ENCODE measurements at regions of chr1 and their contacts with region 1.

Region 1: DNA sequence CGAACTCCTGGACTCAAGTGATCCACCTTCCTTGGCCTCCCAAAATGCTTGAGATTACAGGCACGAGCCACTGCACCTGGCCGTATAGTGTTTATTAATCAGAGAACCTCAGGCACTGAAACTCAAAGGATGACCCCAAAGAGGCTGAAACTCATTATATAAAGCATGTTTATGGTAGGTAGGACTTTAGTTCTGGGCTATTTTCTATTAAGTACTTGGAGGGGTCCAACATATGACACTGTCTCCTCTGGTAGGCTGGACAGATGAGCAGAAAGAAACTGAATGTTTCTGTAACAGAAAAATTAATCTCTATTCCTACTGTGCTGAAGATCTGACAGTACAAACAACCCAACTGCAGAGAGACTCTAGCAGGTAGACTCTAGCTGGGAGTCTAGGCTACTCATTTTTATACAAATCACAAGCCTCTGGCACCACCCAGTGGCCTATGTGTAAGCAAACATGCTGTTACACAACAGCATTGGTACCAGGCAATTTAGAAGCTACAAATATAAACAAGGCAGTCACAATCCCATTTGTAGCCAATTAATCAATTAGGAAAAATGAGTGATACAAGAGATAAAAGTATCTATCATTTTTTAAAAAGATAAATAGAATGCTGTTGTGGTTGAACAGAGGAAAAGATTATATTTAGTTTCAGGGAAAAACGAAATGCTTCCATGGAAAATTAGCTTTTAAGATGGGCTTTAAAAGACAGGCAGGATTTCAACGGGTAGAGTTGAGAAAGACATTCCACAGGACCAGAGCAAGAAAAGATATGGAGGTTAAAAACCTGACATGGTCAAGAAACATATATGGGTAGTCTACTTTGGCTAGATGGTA is 10.4 kb downstream of the DCAF8 start:
- DNase-seq: peak; percentile 52 to 72 (median 56)
- H3K4me3 ChIP-seq: no peak overlapping the region
- H3K4me3 Mint-ChIP-seq: no peak overlapping the region
- H3K27ac ChIP-seq: no peak overlapping the region
- H3K27ac Mint-ChIP-seq: peak overlapping the region; percentile 2 to 90 (median 79)
- H3K4me1 ChIP-seq: peaks cover 12% of the 10 kb centered on the region
- H3K4me1 Mint-ChIP-seq: peaks cover 15 to 20% (median 18%) of the 10 kb centered on the region in 4 donors
- H3K27me3 ChIP-seq: no peaks in the 10 kb centered on the region
- H3K27me3 Mint-ChIP-seq: no peaks in the 10 kb centered on the region

Region 2: DNA sequence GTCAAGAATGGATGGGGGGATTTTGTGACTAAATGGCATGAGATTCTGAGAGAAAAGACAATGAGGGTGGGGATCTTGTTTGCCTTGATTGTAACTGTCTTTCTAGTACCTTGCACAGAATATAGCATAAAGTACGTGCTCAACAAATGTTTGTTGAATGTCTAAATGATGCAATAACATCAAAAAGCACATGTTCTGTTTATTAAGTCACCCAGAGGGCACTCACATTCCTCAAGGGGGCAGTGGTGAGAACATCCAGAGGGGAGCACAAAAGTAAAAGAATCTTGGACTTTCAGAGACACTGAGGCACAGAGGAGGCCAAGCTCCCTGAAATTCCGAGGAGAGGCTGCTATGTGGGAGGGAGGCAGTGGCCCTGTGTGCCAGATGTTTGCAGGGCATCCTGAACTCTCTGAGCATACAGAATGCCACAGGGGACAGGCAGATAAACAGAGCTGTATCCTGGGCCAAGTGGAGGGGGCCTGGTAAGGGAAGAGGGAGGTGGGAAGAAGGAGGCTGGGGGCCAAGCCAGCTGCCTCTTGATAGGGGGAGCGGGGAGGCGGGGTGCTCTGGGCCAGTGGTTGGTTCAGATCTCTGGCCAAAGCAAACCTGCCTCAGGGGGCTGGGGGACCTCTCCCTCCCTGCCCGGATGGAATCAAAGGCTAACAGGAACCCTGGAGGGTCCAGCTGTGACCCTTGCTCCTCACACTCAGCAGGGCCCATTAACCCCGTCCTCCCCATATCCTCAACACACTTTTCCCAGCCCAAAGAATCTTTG is 142.8 kb before region 1 on chr1:
- CTCF ChIA-PET with region 1: interaction called, 45 read pairs
- POLR2A ChIA-PET with region 1: no interaction called
- intact Hi-C with region 1: loop called (anchors 2 kb)
- DNase-seq: peak in 2 of 5 donors; percentile 21 to 35
- H3K4me3 ChIP-seq: no peak overlapping the region
- H3K4me3 Mint-ChIP-seq: peak overlapping the region in 1 of 8 donors; percentile 62
- H3K27ac ChIP-seq: no peak overlapping the region
- H3K27ac Mint-ChIP-seq: peak overlapping the region in 2 of 7 donors; percentile 5 to 37
- H3K4me1 ChIP-seq: no peaks in the 10 kb centered on the region
- H3K4me1 Mint-ChIP-seq: no peaks in the 10 kb centered on the region
- H3K27me3 ChIP-seq: no peaks in the 10 kb centered on the region
- H3K27me3 Mint-ChIP-seq: peaks cover 1 to 12% of the 10 kb centered on the region in 2 donors

Region 3: DNA sequence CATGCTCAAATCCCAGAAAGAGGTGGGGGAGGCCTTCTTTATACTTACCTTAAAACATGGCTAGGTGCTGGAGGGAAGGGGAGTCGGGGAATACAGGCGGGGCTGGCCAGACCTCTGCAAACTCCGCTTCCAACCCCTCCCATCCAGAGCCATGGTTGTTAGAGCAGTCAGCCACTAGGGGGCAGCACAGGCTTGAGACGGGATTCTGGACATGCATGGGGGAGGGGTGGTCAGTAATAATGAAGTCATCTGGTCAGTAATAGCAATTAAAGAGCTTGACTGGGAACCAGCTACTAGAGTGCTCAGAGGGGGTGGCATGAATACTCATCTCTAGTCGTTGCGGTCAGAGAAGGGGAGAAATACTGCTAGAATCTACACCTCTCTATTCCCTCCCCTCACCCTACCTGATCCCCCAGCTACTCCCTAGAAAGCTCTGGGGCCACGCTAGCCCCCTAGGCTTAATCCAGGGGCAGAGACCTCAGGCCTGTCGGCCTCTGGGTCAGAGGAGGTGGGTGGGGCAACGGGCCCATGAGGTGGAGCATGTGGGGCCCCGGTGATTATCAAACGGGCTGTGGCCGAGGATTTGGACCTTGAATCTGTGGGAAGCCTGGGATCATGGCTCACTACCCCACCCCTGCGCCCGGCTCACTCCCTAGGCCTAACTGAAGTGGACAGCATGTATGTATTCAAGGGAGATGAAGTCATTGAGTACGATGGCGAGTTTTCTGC is 58.7 kb before region 1 on chr1:
- CTCF ChIA-PET with region 1: interaction called, 54 read pairs
- POLR2A ChIA-PET with region 1: no interaction called
- intact Hi-C with region 1: loop called (anchors 1 kb)
- DNase-seq: peak; percentile 67 to 75 (median 68)
- H3K4me3 ChIP-seq: no peak overlapping the region
- H3K4me3 Mint-ChIP-seq: no peak overlapping the region
- H3K27ac ChIP-seq: no peak overlapping the region
- H3K27ac Mint-ChIP-seq: no peak overlapping the region
- H3K4me1 ChIP-seq: peaks cover 9% of the 10 kb centered on the region
- H3K4me1 Mint-ChIP-seq: no peaks in the 10 kb centered on the region
- H3K27me3 ChIP-seq: no peaks in the 10 kb centered on the region
- H3K27me3 Mint-ChIP-seq: peaks cover 1 to 3% of the 10 kb centered on the region in 2 donors

Region 4: GRCh38 chr1:160238408-160238807 is 13.5 kb before region 1 on chr1:
- CTCF ChIA-PET with region 1: interaction called, 23 read pairs
- POLR2A ChIA-PET with region 1: interaction called, 4 read pairs
- intact Hi-C with region 1: no loop called
- DNase-seq: no peak
- H3K4me3 ChIP-seq: no peak overlapping the region
- H3K4me3 Mint-ChIP-seq: no peak overlapping the region
- H3K27ac ChIP-seq: no peak overlapping the region
- H3K27ac Mint-ChIP-seq: peak overlapping the region in 1 of 7 donors; percentile 36
- H3K4me1 ChIP-seq: peaks cover 6% of the 10 kb centered on the region
- H3K4me1 Mint-ChIP-seq: peaks cover 2 to 19% (median 14%) of the 10 kb centered on the region in 4 donors
- H3K27me3 ChIP-seq: no peaks in the 10 kb centered on the region
- H3K27me3 Mint-ChIP-seq: no peaks in the 10 kb centered on the region

Region 5: DNA sequence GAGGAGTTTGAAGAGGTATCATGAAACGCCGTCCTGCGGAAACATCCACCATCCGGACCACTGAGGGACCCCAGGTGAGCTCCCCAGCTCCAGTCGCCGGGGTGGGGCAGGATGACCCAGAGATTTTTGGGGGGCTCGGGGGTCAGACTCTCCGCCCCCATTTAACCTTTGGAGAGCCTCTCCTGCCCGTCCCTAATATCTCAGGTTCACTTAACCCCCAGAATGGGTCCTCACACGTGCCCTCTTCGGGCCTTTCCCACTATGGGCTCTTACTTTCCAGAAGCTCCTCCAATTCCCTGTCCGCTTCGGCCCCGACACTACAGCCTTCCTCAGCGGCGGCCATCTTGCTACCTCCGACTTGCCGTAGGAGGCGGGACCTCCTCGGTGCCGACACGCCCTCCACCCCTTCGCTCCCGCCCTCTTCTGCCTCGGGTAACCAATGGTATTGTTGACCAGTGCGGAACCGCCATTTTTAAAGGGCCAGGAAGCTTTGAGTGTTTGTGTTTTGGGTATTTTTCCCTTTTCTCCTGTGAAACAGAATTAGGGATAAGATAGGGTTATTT is 33.0 kb after region 1 on chr1 and contains the start of gene PEX19:
- CTCF ChIA-PET with region 1: interaction called, 13 read pairs
- POLR2A ChIA-PET with region 1: interaction called, 6 read pairs
- intact Hi-C with region 1: loop called (anchors 2 kb)
- DNase-seq: peak; percentile 90 to 95 (median 92)
- H3K4me3 ChIP-seq: peak within 1 kb of the TSS; percentile 53 to 98
- H3K4me3 Mint-ChIP-seq: peak within 1 kb of the TSS; percentile 98 to 100 (median 99)
- H3K27ac ChIP-seq: peak within 1 kb of the TSS; percentile 81
- H3K27ac Mint-ChIP-seq: peak within 1 kb of the TSS; percentile 71 to 99 (median 98)
- H3K4me1 ChIP-seq: peaks cover 24% of the 10 kb centered on the region
- H3K4me1 Mint-ChIP-seq: peaks cover 20 to 44% (median 28%) of the 10 kb centered on the region in 4 donors
- H3K27me3 ChIP-seq: no peaks in the 10 kb centered on the region
- H3K27me3 Mint-ChIP-seq: no peaks in the 10 kb centered on the region
- total RNA-seq, gene PEX19: 53.5 to 60.6 TPM